T-cell (primary cell): ENCODE measurements at regions of chr5 and their contacts with region 1.

Region 1: GRCh38 chr5:99900302-99900852 is 634.8 kb upstream of the FAM174A start:
- DNase-seq: no peak
- ATAC-seq: no peak
- H3K4me3 ChIP-seq: no peak overlapping the region
- H3K4me3 Mint-ChIP-seq: no peak overlapping the region
- H3K27ac ChIP-seq: no peak overlapping the region
- H3K27ac Mint-ChIP-seq: no peak overlapping the region
- H3K4me1 ChIP-seq: no peaks in the 10 kb centered on the region
- H3K4me1 Mint-ChIP-seq: no peaks in the 10 kb centered on the region
- H3K27me3 ChIP-seq: no peaks in the 10 kb centered on the region
- H3K27me3 Mint-ChIP-seq: no peaks in the 10 kb centered on the region

Region 2: DNA sequence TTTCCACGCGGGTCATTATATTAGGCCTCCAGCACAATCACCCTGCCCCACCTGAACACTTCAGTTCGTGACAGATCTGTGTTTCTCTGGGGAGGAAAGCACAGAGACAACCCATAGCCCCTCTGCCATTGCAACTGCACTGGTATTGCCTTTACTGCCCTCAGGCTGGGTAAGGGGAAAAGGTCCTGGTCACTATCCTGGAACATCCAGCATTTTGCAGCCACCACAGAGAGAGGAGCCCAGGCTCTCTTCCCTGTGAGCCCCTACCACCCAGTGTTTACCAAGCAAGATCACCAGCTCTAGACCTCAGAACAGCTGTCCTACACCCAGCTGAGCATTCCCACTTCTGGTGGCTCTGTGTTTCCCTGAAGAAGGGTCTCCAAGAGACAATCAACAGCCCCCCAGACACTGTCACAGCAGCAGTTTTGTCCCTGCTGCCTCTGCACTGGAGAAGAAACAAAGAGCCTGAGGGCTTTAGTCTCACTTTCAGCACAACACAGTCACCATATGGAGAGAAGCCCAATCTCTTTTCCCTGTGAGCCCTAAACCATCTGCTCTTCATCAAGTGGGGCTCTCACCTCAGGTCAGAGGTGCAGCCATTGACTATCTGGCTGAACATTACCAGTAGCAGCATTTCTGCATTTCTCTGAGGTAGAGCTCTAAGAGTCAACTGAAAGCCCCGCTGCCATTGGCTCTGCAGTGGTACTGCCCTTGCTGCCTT is 20.4 kb before region 1 on chr5:
- CTCF ChIA-PET with region 1: no interaction called
- POLR2A ChIA-PET with region 1: interaction called in 1 of 2 experiments, 10 read pairs
- DNase-seq: no peak
- ATAC-seq: no peak
- H3K4me3 ChIP-seq: no peak overlapping the region
- H3K4me3 Mint-ChIP-seq: no peak overlapping the region
- H3K27ac ChIP-seq: no peak overlapping the region
- H3K27ac Mint-ChIP-seq: no peak overlapping the region
- H3K4me1 ChIP-seq: no peaks in the 10 kb centered on the region
- H3K4me1 Mint-ChIP-seq: no peaks in the 10 kb centered on the region
- H3K27me3 ChIP-seq: no peaks in the 10 kb centered on the region
- H3K27me3 Mint-ChIP-seq: no peaks in the 10 kb centered on the region

Region 3: DNA sequence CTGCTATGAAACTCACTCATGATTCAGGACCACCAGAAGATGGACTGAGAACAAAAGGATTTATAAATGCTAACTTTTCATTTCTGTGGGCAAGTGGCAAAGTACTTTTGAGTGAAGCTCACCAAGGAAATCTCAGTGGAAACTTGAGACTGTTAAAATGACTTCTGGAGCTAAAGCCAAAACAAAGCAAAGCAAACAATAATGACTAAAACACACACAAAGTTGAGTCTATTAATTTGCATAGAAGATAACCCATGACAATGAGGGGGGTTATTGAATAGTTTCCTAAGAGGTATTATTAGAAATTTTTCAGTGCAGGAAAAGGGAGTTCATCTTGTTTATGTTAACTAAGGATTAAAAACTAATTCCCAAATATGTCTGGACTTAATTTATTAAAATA is 22.0 kb after region 1 on chr5:
- CTCF ChIA-PET with region 1: no interaction called
- POLR2A ChIA-PET with region 1: no interaction called
- DNase-seq: no peak
- ATAC-seq: no peak
- H3K4me3 ChIP-seq: no peak overlapping the region
- H3K4me3 Mint-ChIP-seq: no peak overlapping the region
- H3K27ac ChIP-seq: no peak overlapping the region
- H3K27ac Mint-ChIP-seq: no peak overlapping the region
- H3K4me1 ChIP-seq: no peaks in the 10 kb centered on the region
- H3K4me1 Mint-ChIP-seq: no peaks in the 10 kb centered on the region
- H3K27me3 ChIP-seq: no peaks in the 10 kb centered on the region
- H3K27me3 Mint-ChIP-seq: no peaks in the 10 kb centered on the region

Region 4: DNA sequence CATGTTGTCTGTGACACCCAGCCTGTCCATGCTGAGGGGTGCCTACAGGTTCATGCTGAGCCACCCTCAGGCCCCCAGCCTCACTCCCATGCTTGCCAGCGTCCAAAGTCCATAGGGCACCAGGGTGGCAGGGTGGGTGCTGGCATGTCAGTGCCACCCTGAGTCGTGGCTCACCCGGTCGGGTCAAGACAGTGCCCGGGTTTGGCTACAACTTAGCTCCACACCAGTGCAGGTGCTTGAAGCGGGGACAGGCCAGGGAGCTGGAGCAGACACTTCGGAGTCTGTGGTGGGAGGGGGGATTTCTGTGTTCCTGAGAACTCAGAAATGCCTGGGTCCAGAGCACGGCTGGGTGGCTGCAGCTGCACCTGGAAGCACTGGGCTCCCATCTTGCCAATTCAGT is 55.6 kb after region 1 on chr5:
- CTCF ChIA-PET with region 1: no interaction called
- POLR2A ChIA-PET with region 1: no interaction called
- DNase-seq: no peak
- ATAC-seq: no peak
- H3K4me3 ChIP-seq: no peak overlapping the region
- H3K4me3 Mint-ChIP-seq: no peak overlapping the region
- H3K27ac ChIP-seq: no peak overlapping the region
- H3K27ac Mint-ChIP-seq: no peak overlapping the region
- H3K4me1 ChIP-seq: no peaks in the 10 kb centered on the region
- H3K4me1 Mint-ChIP-seq: no peaks in the 10 kb centered on the region
- H3K27me3 ChIP-seq: no peaks in the 10 kb centered on the region
- H3K27me3 Mint-ChIP-seq: no peaks in the 10 kb centered on the region

Region 5: DNA sequence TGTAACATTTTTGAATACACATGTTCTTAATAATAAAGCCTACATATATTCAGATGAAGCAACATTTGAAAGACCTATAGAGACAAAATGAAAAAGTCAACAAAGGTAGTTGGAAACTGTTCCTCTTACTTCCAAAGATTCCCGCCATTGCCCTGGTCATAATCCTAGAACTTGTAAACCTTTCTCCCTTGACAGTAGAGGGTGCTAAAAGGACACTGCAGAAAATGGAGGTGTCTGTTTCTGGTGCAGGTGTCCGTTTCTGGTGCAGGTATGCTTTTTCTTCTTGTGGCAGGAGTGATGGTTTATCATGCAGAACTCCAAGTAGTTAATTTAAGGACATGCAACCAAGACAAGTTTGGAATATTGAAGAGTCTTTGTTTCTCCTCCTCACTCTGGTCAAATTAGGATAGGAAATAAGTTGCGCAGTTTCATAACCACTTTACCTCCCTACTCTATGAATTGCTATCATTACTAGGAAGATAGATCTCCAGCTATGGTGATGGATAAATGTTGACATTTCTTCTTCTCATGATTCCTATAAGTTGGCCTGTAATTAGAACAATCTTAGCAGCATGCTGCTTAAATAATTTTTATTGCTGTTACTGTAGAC is 578.8 kb after region 1 on chr5:
- CTCF ChIA-PET with region 1: no interaction called
- POLR2A ChIA-PET with region 1: no interaction called
- DNase-seq: peak in 2 of 35 experiments; percentile 5 to 47
- ATAC-seq: no peak
- H3K4me3 ChIP-seq: no peak overlapping the region
- H3K4me3 Mint-ChIP-seq: no peak overlapping the region
- H3K27ac ChIP-seq: no peak overlapping the region
- H3K27ac Mint-ChIP-seq: no peak overlapping the region
- H3K4me1 ChIP-seq: no peaks in the 10 kb centered on the region
- H3K4me1 Mint-ChIP-seq: no peaks in the 10 kb centered on the region
- H3K27me3 ChIP-seq: no peaks in the 10 kb centered on the region
- H3K27me3 Mint-ChIP-seq: no peaks in the 10 kb centered on the region